Activated CD4-positive, alpha-beta memory T cell treated with anti-CD3 and anti-CD28 coated beads for 36 hours (primary cell): ENCODE measurements at regions of chr7 and their contacts with region 1.

Region 1: GRCh38 chr7:136016649-136017395 is 39.7 kb upstream of the MTPN start:
- DNase-seq: no peak
- H3K4me3 Mint-ChIP-seq: no peak overlapping the region
- H3K27ac Mint-ChIP-seq: no peak overlapping the region
- H3K4me1 Mint-ChIP-seq: peaks cover 22% of the 10 kb centered on the region
- H3K27me3 Mint-ChIP-seq: peaks cover 10% of the 10 kb centered on the region

Region 2: GRCh38 chr7:135831455-135832195 is 185.2 kb before region 1 on chr7:
- CTCF ChIA-PET with region 1: no interaction called
- POLR2A ChIA-PET with region 1: no interaction called
- intact Hi-C with region 1: loop called (anchors 5 kb)
- DNase-seq: peak; percentile 12
- H3K4me3 Mint-ChIP-seq: no peak overlapping the region
- H3K27ac Mint-ChIP-seq: no peak overlapping the region
- H3K4me1 Mint-ChIP-seq: peaks cover 24% of the 10 kb centered on the region
- H3K27me3 Mint-ChIP-seq: no peaks in the 10 kb centered on the region

Region 3: GRCh38 chr7:136130819-136131643 is 114.2 kb after region 1 on chr7:
- CTCF ChIA-PET with region 1: no interaction called
- POLR2A ChIA-PET with region 1: no interaction called
- intact Hi-C with region 1: loop called (anchors 2 kb)
- DNase-seq: no peak
- H3K4me3 Mint-ChIP-seq: no peak overlapping the region
- H3K27ac Mint-ChIP-seq: peak overlapping the region; percentile 44
- H3K4me1 Mint-ChIP-seq: peaks cover 14% of the 10 kb centered on the region
- H3K27me3 Mint-ChIP-seq: no peaks in the 10 kb centered on the region